ENCODE measurements at regions of chr5 and their contacts with region 1.

Region 1: GRCh38 chr5:127373858-127374491 is 83.4 kb downstream of the MEGF10 start:
- DNase-seq: no peak
- H3K4me3 ChIP-seq: no peak overlapping the region
- H3K27ac ChIP-seq: no peak overlapping the region
- H3K4me1 ChIP-seq: peaks cover 0 to 4% (median 0%) of the 10 kb centered on the region in 4 experiments; a peak in 2 of 7 replicates
- H3K27me3 ChIP-seq: no peaks in the 10 kb centered on the region
- CTCF ChIP-seq: peak in 2 of 3 experiments; percentile 46 to 55; a peak in 2 of 4 replicates
- EP300 ChIP-seq: no peak
- POLR2A ChIP-seq: no peak
- RAD21 ChIP-seq: peak; percentile 53 to 62

Region 2: GRCh38 chr5:127358740-127359139 is 15.2 kb before region 1 on chr5:
- CTCF ChIA-PET with region 1: interaction called, 15 read pairs
- POLR2A ChIA-PET with region 1: no interaction called
- DNase-seq: no peak
- H3K4me3 ChIP-seq: no peak overlapping the region
- H3K27ac ChIP-seq: no peak overlapping the region
- H3K4me1 ChIP-seq: peaks cover 0 to 4% (median 0%) of the 10 kb centered on the region in 4 experiments; a peak in 1 of 7 replicates
- H3K27me3 ChIP-seq: no peaks in the 10 kb centered on the region
- CTCF ChIP-seq: no peak
- EP300 ChIP-seq: no peak
- POLR2A ChIP-seq: no peak
- RAD21 ChIP-seq: no peak

Region 3: DNA sequence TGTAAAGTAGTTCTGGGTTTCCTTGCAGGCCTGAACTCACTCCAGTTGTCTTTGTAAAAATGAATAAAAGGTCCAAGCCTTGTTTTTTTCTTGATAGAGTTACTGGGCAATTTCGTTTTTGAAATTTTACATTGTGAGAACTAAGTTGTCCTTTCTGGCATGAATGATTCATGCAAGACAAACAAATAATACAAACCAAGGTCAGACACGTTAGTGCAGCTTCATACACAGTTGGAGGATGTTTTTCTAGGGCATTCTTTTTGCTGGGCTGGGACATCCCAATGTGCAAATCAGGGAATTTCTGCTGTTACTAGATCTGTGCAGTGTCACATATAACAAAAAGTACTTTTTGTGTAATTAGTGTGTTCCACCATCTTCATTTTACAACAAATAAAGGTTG is 12.6 kb after region 1 on chr5:
- CTCF ChIA-PET with region 1: interaction called, 17 read pairs
- POLR2A ChIA-PET with region 1: no interaction called
- DNase-seq: no peak
- H3K4me3 ChIP-seq: no peak overlapping the region
- H3K27ac ChIP-seq: no peak overlapping the region
- H3K4me1 ChIP-seq: no peaks in the 10 kb centered on the region
- H3K27me3 ChIP-seq: no peaks in the 10 kb centered on the region
- CTCF ChIP-seq: no peak
- EP300 ChIP-seq: no peak
- POLR2A ChIP-seq: no peak
- RAD21 ChIP-seq: no peak

Region 4: DNA sequence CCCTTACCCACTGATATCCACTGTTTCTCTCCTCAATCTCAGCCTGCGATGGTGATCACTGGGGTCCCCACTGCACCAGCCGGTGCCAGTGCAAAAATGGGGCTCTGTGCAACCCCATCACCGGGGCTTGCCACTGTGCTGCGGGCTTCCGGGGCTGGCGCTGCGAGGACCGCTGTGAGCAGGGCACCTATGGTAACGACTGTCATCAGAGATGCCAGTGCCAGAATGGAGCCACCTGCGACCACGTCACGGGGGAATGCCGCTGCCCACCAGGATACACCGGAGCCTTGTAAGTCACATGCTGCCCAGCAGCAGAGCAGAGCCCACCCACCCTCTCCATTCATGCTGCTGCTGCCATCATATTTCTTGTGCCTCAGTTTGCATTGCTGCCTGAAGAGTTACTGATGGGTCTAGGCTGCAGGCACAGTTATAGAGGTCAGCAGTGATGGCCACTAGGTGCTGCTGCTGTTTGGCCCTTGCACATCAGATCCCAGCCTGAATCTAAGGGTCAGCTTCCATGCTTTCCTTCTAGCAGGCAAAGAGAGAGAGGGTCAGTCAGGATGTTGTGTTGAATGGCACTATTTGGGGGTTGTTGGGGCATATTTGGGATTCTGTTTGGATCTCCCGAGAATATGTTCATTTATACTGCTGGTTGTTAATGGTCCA is 22.6 kb after region 1 on chr5:
- CTCF ChIA-PET with region 1: interaction called, 11 read pairs
- POLR2A ChIA-PET with region 1: interaction called, 3 read pairs
- DNase-seq: no peak
- H3K4me3 ChIP-seq: no peak overlapping the region
- H3K27ac ChIP-seq: no peak overlapping the region
- H3K4me1 ChIP-seq: no peaks in the 10 kb centered on the region; a peak in 2 of 7 replicates
- H3K27me3 ChIP-seq: no peaks in the 10 kb centered on the region
- CTCF ChIP-seq: peak; percentile 4 to 48 (median 32); a peak in 3 of 4 replicates
- EP300 ChIP-seq: no peak
- POLR2A ChIP-seq: no peak
- RAD21 ChIP-seq: peak; percentile 40 to 54

Region 5: DNA sequence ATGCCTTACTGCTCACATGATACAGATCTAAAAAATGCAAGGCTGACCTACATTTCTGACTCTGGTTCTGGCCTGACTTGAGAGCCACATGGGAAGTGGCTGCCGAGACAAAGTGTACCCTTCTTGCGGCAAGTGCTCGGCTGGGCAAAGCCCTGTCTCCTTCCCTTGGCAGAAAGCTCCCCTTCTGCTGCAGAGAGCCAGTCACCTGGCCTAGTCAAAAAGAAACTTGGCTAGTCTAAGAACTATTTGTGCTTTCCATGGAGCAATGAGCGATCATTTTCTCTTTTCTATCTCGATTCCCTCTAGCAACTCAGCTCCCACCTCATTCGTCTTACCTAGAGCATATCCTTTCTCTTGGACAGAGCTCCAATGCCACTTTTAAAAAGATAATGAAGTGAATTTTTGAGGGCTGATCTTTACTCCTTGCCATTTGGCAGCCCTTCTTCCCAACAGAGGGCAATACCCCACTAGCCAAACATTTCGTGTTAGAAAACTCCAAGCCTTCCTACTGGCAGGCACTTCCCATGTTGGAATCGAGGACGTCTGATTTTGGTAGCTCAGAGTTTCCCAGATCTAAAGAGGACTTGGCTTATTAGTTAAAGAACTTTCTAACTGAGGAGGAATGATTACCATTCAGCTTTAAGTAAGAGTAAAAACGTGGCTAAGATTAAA is 35.4 kb after region 1 on chr5:
- CTCF ChIA-PET with region 1: interaction called, 11 read pairs
- POLR2A ChIA-PET with region 1: no interaction called
- DNase-seq: no peak
- H3K4me3 ChIP-seq: no peak overlapping the region
- H3K27ac ChIP-seq: no peak overlapping the region
- H3K4me1 ChIP-seq: peaks cover 0 to 10% (median 8%) of the 10 kb centered on the region in 4 experiments; a peak in 6 of 7 replicates
- H3K27me3 ChIP-seq: no peaks in the 10 kb centered on the region
- CTCF ChIP-seq: no peak
- EP300 ChIP-seq: no peak
- POLR2A ChIP-seq: no peak
- RAD21 ChIP-seq: no peak

Region 6: GRCh38 chr5:127451096-127451495 is 77.1 kb after region 1 on chr5:
- CTCF ChIA-PET with region 1: no interaction called
- POLR2A ChIA-PET with region 1: no interaction called
- DNase-seq: no peak
- H3K4me3 ChIP-seq: no peak overlapping the region
- H3K27ac ChIP-seq: no peak overlapping the region
- H3K4me1 ChIP-seq: no peaks in the 10 kb centered on the region
- H3K27me3 ChIP-seq: no peaks in the 10 kb centered on the region
- CTCF ChIP-seq: no peak
- EP300 ChIP-seq: no peak
- POLR2A ChIP-seq: no peak
- RAD21 ChIP-seq: no peak